ENCODE measurements at regions of chr1 and their contacts with region 1.

Region 1: GRCh38 chr1:193019442-193020026 is 39.6 kb downstream of the UCHL5 start:
- DNase-seq: peak in 1 of 2 donors; percentile 79
- H3K4me3 ChIP-seq: no peak overlapping the region
- H3K27ac ChIP-seq: no peak overlapping the region
- H3K4me1 ChIP-seq: peaks cover 0 to 8% (median 0%) of the 10 kb centered on the region in 4 donors
- H3K27me3 ChIP-seq: no peaks in the 10 kb centered on the region
- CTCF ChIP-seq: peak in 5 of 7 experiments; percentile 21 to 60 (median 47)
- EP300 ChIP-seq: no peak
- POLR2A ChIP-seq: no peak

Region 2: GRCh38 chr1:192793983-192794767 is 225.4 kb before region 1 on chr1:
- intact Hi-C with region 1: loop called (anchors 10 kb)
- DNase-seq: no peak
- H3K4me3 ChIP-seq: no peak overlapping the region
- H3K27ac ChIP-seq: no peak overlapping the region
- H3K4me1 ChIP-seq: no peaks in the 10 kb centered on the region
- H3K27me3 ChIP-seq: no peaks in the 10 kb centered on the region
- CTCF ChIP-seq: no peak
- EP300 ChIP-seq: no peak
- POLR2A ChIP-seq: no peak

Region 3: GRCh38 chr1:192831706-192832355 is 187.7 kb before region 1 on chr1:
- intact Hi-C with region 1: no loop called
- DNase-seq: no peak
- H3K4me3 ChIP-seq: no peak overlapping the region
- H3K27ac ChIP-seq: no peak overlapping the region
- H3K4me1 ChIP-seq: peaks cover 0 to 22% (median 5%) of the 10 kb centered on the region in 4 donors
- H3K27me3 ChIP-seq: no peaks in the 10 kb centered on the region
- CTCF ChIP-seq: no peak
- EP300 ChIP-seq: no peak
- POLR2A ChIP-seq: no peak